PC-3 (cell line): ENCODE measurements at regions of chr1 and their contacts with region 1.

Region 1: GRCh38 chr1:84365225-84366221 is 32.8 kb upstream of the DNASE2B start:
- DNase-seq: peak; percentile 99
- ATAC-seq: peak; percentile 94
- H3K4me3 ChIP-seq: no peak overlapping the region
- H3K27ac ChIP-seq: peak overlapping the region; percentile 70
- H3K4me1 ChIP-seq: peaks cover 36% of the 10 kb centered on the region
- H3K27me3 ChIP-seq: no peaks in the 10 kb centered on the region
- CTCF ChIP-seq: no peak

Region 2: GRCh38 chr1:84412316-84412942 is 46.9 kb after region 1 on chr1:
- CTCF ChIA-PET with region 1: no interaction called
- POLR2A ChIA-PET with region 1: no interaction called
- intact Hi-C with region 1: loop called (anchors 2 kb)
- DNase-seq: no peak
- ATAC-seq: no peak
- H3K4me3 ChIP-seq: no peak overlapping the region
- H3K27ac ChIP-seq: no peak overlapping the region
- H3K4me1 ChIP-seq: peaks cover 41% of the 10 kb centered on the region
- H3K27me3 ChIP-seq: no peaks in the 10 kb centered on the region
- CTCF ChIP-seq: no peak

Region 3: GRCh38 chr1:85188530-85188929 is 823.0 kb after region 1 on chr1:
- CTCF ChIA-PET with region 1: no interaction called
- POLR2A ChIA-PET with region 1: no interaction called
- intact Hi-C with region 1: no loop called
- DNase-seq: no peak
- ATAC-seq: no peak
- H3K4me3 ChIP-seq: no peak overlapping the region
- H3K27ac ChIP-seq: no peak overlapping the region
- H3K4me1 ChIP-seq: peaks cover 6% of the 10 kb centered on the region; the same call in 1 of the 2 replicates
- H3K27me3 ChIP-seq: no peaks in the 10 kb centered on the region
- CTCF ChIP-seq: no peak